Activated B cell treated with CpG ODN at 0.5 μM for 24 hours (primary cell): ENCODE measurements at regions of chr9 and their contacts with region 1.

Region 1: GRCh38 chr9:70413798-70414775 is at the start of gene KLF9:
- DNase-seq: peak; percentile 78
- ATAC-seq: peak; percentile 72
- H3K4me3 Mint-ChIP-seq: peak within 1 kb of the TSS; percentile 97
- H3K27ac Mint-ChIP-seq: peak within 1 kb of the TSS; percentile 100
- H3K4me1 Mint-ChIP-seq: peaks cover 52% of the 10 kb centered on the region
- H3K27me3 Mint-ChIP-seq: no peaks in the 10 kb centered on the region
- CTCF ChIP-seq: no peak
- total RNA-seq, gene KLF9: 5.2 and 6.3 TPM in 2 replicates

Region 2: GRCh38 chr9:68546596-68547390 is 1867.3 kb before region 1 on chr9:
- CTCF ChIA-PET with region 1: no interaction called
- POLR2A ChIA-PET with region 1: no interaction called
- intact Hi-C with region 1: loop called (anchors 2 kb)
- DNase-seq: peak; percentile 20
- ATAC-seq: peak; percentile 83
- H3K4me3 Mint-ChIP-seq: peak overlapping the region; percentile 66
- H3K27ac Mint-ChIP-seq: peak overlapping the region; percentile 84
- H3K4me1 Mint-ChIP-seq: peaks cover 42% of the 10 kb centered on the region
- H3K27me3 Mint-ChIP-seq: no peaks in the 10 kb centered on the region
- CTCF ChIP-seq: no peak

Region 3: GRCh38 chr9:68704814-68705530 is 1709.1 kb before region 1 on chr9 and contains the start of gene PIP5K1B:
- CTCF ChIA-PET with region 1: no interaction called
- POLR2A ChIA-PET with region 1: no interaction called
- intact Hi-C with region 1: loop called (anchors 5 kb)
- DNase-seq: peak; percentile 76
- ATAC-seq: peak; percentile 85
- H3K4me3 Mint-ChIP-seq: peak within 1 kb of the TSS; percentile 97
- H3K27ac Mint-ChIP-seq: peak within 1 kb of the TSS; percentile 82
- H3K4me1 Mint-ChIP-seq: peaks cover 50% of the 10 kb centered on the region
- H3K27me3 Mint-ChIP-seq: no peaks in the 10 kb centered on the region
- CTCF ChIP-seq: no peak
- total RNA-seq, gene PIP5K1B: 17.1 and 22.0 TPM in 2 replicates

Region 4: GRCh38 chr9:70258692-70259511 is 155.2 kb before region 1 on chr9 and contains the start of gene SMC5:
- CTCF ChIA-PET with region 1: no interaction called
- POLR2A ChIA-PET with region 1: interaction called, 13 read pairs
- intact Hi-C with region 1: loop called (anchors 1 kb)
- DNase-seq: peak; percentile 90
- ATAC-seq: peak; percentile 82
- H3K4me3 Mint-ChIP-seq: peak within 1 kb of the TSS; percentile 93
- H3K27ac Mint-ChIP-seq: peak within 1 kb of the TSS; percentile 99
- H3K4me1 Mint-ChIP-seq: peaks cover 52% of the 10 kb centered on the region
- H3K27me3 Mint-ChIP-seq: no peaks in the 10 kb centered on the region
- CTCF ChIP-seq: no peak
- total RNA-seq, gene SMC5: 46.9 and 49.3 TPM in 2 replicates

Region 5: DNA sequence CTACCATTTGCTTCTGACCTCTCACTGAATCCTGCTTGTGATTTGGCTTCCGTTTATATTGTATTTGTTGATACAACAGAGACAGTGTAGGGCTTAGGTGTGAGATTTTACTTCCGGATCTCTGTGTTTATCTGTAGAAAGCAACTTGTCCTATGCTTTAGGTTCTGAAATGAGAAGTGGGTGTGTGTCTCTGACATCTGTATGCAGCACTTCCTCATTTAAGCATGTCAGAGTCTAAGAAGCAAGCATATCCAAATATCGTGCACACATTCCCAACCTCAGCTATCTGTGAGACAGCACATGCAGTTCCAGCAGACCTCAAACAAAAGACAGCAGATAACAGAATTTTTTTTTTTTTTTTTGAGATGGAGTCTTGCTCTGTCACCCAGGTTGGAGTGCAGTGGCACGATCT is 15.9 kb before region 1 on chr9:
- CTCF ChIA-PET with region 1: interaction called, 4 read pairs
- POLR2A ChIA-PET with region 1: interaction called, 48 read pairs
- intact Hi-C with region 1: loop called (anchors 1 kb)
- DNase-seq: no peak
- ATAC-seq: peak; percentile 97
- H3K4me3 Mint-ChIP-seq: peak overlapping the region; percentile 51
- H3K27ac Mint-ChIP-seq: peak overlapping the region; percentile 86
- H3K4me1 Mint-ChIP-seq: peaks cover 66% of the 10 kb centered on the region
- H3K27me3 Mint-ChIP-seq: no peaks in the 10 kb centered on the region
- CTCF ChIP-seq: no peak

Region 6: DNA sequence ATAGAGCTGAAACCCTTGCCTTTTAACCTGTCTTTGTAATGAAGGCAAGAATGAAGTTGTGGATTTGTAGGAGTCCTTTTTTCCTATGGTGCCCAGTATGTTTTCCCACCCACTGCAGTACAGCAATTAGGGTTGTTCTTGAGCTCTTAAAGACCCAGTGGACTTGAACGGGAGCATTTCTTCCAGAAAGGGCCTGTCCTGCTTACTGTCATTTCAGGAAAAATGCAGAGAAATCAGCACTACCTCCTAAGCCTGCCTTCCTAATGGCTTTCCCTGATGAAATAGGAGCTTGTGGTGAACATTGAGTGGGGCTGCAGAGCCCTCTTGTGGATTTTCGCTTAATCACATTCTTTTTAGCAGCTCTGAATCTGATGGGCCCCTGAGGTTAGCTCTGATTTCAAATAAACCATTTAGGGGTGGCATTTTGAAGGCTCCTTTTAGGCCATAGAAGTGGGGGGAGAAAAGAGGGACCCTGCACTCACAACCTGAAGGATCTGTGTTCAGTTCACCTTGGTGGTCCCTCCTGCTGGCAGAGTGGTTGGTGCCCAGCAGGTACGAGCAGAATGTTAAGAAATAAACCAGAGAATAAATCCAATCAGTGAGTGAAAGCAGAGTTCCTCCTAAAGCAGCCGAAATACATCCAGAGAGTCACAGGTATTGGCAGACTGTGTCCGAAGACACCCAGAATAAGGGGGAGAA is 188.4 kb after region 1 on chr9:
- CTCF ChIA-PET with region 1: interaction called, 3 read pairs
- POLR2A ChIA-PET with region 1: interaction called, 7 read pairs
- intact Hi-C with region 1: loop called (anchors 5 kb)
- DNase-seq: no peak
- ATAC-seq: peak; percentile 75
- H3K4me3 Mint-ChIP-seq: no peak overlapping the region
- H3K27ac Mint-ChIP-seq: no peak overlapping the region
- H3K4me1 Mint-ChIP-seq: peaks cover 10% of the 10 kb centered on the region
- H3K27me3 Mint-ChIP-seq: peaks cover 3% of the 10 kb centered on the region
- CTCF ChIP-seq: peak; percentile 51

Region 7: DNA sequence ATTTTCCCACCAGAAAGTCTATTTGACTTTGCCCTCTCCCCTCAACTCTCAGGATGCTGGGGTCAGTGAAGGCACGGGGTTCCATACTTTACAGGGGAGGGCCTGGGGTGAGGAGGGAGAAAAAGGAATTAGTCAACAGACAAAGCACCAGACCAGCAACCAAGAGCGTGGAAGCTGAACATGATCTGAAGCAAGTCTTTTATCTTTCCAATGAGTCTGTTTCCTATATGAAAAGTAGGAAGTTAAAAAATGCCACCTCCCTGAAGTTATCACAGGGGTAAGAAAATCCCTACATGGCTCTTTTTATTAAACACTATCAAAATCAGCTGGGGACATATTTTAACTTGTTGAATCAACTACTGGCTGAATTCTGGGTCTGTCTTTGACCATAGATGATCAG is 370.4 kb after region 1 on chr9:
- CTCF ChIA-PET with region 1: no interaction called
- POLR2A ChIA-PET with region 1: no interaction called
- intact Hi-C with region 1: no loop called
- DNase-seq: no peak
- ATAC-seq: no peak
- H3K4me3 Mint-ChIP-seq: no peak overlapping the region
- H3K27ac Mint-ChIP-seq: no peak overlapping the region
- H3K4me1 Mint-ChIP-seq: no peaks in the 10 kb centered on the region
- H3K27me3 Mint-ChIP-seq: no peaks in the 10 kb centered on the region
- CTCF ChIP-seq: no peak

Region 8: GRCh38 chr9:72364679-72365524 is 1950.8 kb after region 1 on chr9 and contains the start of gene ZFAND5:
- CTCF ChIA-PET with region 1: no interaction called
- POLR2A ChIA-PET with region 1: interaction called, 3 read pairs
- intact Hi-C with region 1: loop called (anchors 2 kb)
- DNase-seq: peak; percentile 89
- ATAC-seq: peak; percentile 80
- H3K4me3 Mint-ChIP-seq: peak within 1 kb of the TSS; percentile 96
- H3K27ac Mint-ChIP-seq: peak within 1 kb of the TSS; percentile 98
- H3K4me1 Mint-ChIP-seq: peaks cover 40% of the 10 kb centered on the region
- H3K27me3 Mint-ChIP-seq: no peaks in the 10 kb centered on the region
- CTCF ChIP-seq: no peak
- total RNA-seq, gene ZFAND5: 79.2 and 79.5 TPM in 2 replicates